Activated CD4-positive, alpha-beta T cell treated with anti-CD3 and anti-CD28 coated beads for 36 hours (primary cell): ENCODE measurements at regions of chr18 and their contacts with region 1.

Region 1: GRCh38 chr18:62249478-62250097 is 62.5 kb downstream of the RELCH start:
- DNase-seq: peak; percentile 86
- ATAC-seq: peak; percentile 57
- H3K4me3 Mint-ChIP-seq: no peak overlapping the region
- H3K27ac Mint-ChIP-seq: no peak overlapping the region
- H3K4me1 Mint-ChIP-seq: peaks cover 4% of the 10 kb centered on the region
- H3K27me3 Mint-ChIP-seq: no peaks in the 10 kb centered on the region

Region 2: DNA sequence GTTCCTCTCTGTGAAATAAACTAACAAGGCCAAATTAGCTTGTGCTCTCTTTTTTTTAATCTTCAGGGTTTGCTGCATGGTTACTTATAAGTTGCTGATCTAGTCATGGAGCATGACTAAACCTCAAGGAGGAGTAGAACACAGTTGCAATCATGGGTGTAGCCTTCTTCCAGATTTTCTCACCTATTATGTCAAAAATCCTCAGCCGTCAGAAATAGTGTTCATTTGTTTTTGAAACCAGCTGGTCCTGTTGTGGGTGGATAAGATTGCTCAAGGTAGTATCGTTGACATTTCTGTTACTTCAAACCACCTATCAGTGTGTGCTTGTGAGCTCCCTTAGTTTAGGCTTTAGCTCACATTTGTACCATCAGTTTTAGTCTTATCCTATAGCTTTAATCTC is 51.3 kb before region 1 on chr18:
- CTCF ChIA-PET with region 1: interaction called, 24 read pairs
- POLR2A ChIA-PET with region 1: interaction called, 3 read pairs
- intact Hi-C with region 1: no loop called
- DNase-seq: no peak
- ATAC-seq: peak; percentile 84
- H3K4me3 Mint-ChIP-seq: no peak overlapping the region
- H3K27ac Mint-ChIP-seq: no peak overlapping the region
- H3K4me1 Mint-ChIP-seq: peaks cover 61% of the 10 kb centered on the region
- H3K27me3 Mint-ChIP-seq: no peaks in the 10 kb centered on the region

Region 3: DNA sequence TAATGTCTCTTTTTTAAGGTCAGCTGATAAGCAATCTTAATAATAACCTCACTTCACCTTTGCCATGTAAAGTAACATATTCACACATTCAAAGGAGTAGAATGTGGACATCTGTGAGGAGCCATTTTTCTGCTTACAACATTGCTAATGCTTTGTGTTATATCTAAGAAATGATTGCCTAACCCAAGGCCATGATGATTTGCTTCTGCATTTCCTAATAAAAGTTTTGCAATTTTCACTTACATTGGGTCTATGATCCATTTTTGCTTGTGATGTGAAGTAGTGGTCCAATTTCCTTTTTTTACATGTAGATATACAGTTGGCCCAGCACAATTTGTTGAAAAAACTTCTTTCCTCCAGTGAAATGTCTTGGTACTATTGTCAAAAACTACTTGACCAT is 40.5 kb before region 1 on chr18:
- CTCF ChIA-PET with region 1: interaction called, 10 read pairs
- POLR2A ChIA-PET with region 1: no interaction called
- intact Hi-C with region 1: no loop called
- DNase-seq: no peak
- ATAC-seq: no peak
- H3K4me3 Mint-ChIP-seq: no peak overlapping the region
- H3K27ac Mint-ChIP-seq: no peak overlapping the region
- H3K4me1 Mint-ChIP-seq: peaks cover 33% of the 10 kb centered on the region
- H3K27me3 Mint-ChIP-seq: no peaks in the 10 kb centered on the region

Region 4: GRCh38 chr18:62214790-62215189 is 34.8 kb before region 1 on chr18:
- CTCF ChIA-PET with region 1: interaction called, 13 read pairs
- POLR2A ChIA-PET with region 1: no interaction called
- intact Hi-C with region 1: no loop called
- DNase-seq: no peak
- ATAC-seq: no peak
- H3K4me3 Mint-ChIP-seq: no peak overlapping the region
- H3K27ac Mint-ChIP-seq: no peak overlapping the region
- H3K4me1 Mint-ChIP-seq: peaks cover 22% of the 10 kb centered on the region
- H3K27me3 Mint-ChIP-seq: no peaks in the 10 kb centered on the region

Region 5: DNA sequence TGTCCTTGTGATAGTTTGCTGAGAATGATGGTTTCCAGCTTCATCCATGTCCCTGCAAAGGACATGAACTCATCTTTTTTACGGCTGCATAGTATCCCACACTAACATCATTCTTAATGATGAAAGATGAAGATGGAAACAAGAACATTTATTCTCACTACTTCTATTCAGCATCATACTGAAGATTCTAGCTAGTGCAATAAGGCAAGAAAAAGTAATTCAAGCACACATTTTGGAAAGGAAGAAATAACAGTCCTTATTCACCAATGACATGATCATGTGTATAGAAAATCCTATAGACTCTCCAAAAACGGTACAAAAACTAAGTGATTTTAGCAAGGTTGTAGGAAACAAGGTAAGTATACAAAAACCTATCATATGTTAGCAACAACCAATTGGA is 25.4 kb before region 1 on chr18:
- CTCF ChIA-PET with region 1: interaction called, 29 read pairs
- POLR2A ChIA-PET with region 1: no interaction called
- intact Hi-C with region 1: no loop called
- DNase-seq: no peak
- ATAC-seq: no peak
- H3K4me3 Mint-ChIP-seq: no peak overlapping the region
- H3K27ac Mint-ChIP-seq: no peak overlapping the region
- H3K4me1 Mint-ChIP-seq: peaks cover 3% of the 10 kb centered on the region
- H3K27me3 Mint-ChIP-seq: no peaks in the 10 kb centered on the region

Region 6: DNA sequence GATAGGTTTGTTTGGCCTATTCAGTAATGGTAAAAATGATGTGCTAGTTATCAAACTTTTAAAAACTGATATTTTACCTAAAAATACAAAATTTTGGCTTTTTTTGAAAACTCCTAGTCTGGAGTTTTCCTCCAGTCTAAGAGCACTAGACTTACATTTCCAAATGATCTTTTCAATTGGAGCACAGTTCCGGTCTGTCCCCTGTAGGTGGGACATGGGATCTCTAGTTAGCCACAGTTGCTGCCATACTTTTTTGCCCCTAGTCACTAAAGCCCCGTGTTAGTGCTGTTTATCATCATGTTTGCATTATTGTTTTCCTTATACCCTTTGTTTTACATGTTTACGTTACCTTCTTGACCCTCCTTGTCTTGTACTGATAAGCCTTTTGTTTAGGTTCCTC is 10.1 kb before region 1 on chr18:
- CTCF ChIA-PET with region 1: interaction called, 38 read pairs
- POLR2A ChIA-PET with region 1: no interaction called
- intact Hi-C with region 1: no loop called
- DNase-seq: no peak
- ATAC-seq: no peak
- H3K4me3 Mint-ChIP-seq: no peak overlapping the region
- H3K27ac Mint-ChIP-seq: no peak overlapping the region
- H3K4me1 Mint-ChIP-seq: peaks cover 7% of the 10 kb centered on the region
- H3K27me3 Mint-ChIP-seq: no peaks in the 10 kb centered on the region

Region 7: GRCh38 chr18:62264984-62265383 is 15.4 kb after region 1 on chr18:
- CTCF ChIA-PET with region 1: interaction called, 41 read pairs
- POLR2A ChIA-PET with region 1: no interaction called
- intact Hi-C with region 1: no loop called
- DNase-seq: no peak
- ATAC-seq: no peak
- H3K4me3 Mint-ChIP-seq: no peak overlapping the region
- H3K27ac Mint-ChIP-seq: no peak overlapping the region
- H3K4me1 Mint-ChIP-seq: no peaks in the 10 kb centered on the region
- H3K27me3 Mint-ChIP-seq: no peaks in the 10 kb centered on the region

Region 8: DNA sequence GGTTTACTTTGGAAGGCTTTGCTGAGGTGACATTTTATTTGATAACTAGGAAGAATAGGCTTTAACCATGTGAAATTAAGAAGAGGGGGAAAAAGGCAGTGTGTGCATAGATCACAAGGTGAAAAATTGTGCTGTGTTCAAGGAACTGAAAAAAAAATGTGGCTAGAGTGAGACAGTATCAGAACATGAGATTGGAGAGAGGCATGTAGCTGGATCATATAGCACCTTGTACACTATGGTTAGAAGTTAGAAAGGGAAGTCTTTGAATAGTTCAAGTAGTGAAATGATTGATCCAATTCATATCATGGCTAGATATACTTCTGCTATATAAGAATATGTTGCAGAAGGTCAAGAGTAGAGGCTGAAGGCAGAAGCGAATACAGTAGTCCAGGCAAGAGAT is 63.3 kb after region 1 on chr18:
- CTCF ChIA-PET with region 1: no interaction called
- POLR2A ChIA-PET with region 1: no interaction called
- intact Hi-C with region 1: no loop called
- DNase-seq: no peak
- ATAC-seq: no peak
- H3K4me3 Mint-ChIP-seq: no peak overlapping the region
- H3K27ac Mint-ChIP-seq: no peak overlapping the region
- H3K4me1 Mint-ChIP-seq: no peaks in the 10 kb centered on the region
- H3K27me3 Mint-ChIP-seq: peaks cover 3% of the 10 kb centered on the region

Region 9: GRCh38 chr18:63292831-63293683 is 1043.5 kb after region 1 on chr18:
- CTCF ChIA-PET with region 1: no interaction called
- POLR2A ChIA-PET with region 1: no interaction called
- intact Hi-C with region 1: no loop called
- DNase-seq: peak; percentile 38
- ATAC-seq: peak; percentile 34
- H3K4me3 Mint-ChIP-seq: peak overlapping the region; percentile 22
- H3K27ac Mint-ChIP-seq: peak overlapping the region; percentile 38
- H3K4me1 Mint-ChIP-seq: peaks cover 53% of the 10 kb centered on the region
- H3K27me3 Mint-ChIP-seq: no peaks in the 10 kb centered on the region